ENCODE measurements at regions of chr6 and their contacts with region 1.

Region 1: DNA sequence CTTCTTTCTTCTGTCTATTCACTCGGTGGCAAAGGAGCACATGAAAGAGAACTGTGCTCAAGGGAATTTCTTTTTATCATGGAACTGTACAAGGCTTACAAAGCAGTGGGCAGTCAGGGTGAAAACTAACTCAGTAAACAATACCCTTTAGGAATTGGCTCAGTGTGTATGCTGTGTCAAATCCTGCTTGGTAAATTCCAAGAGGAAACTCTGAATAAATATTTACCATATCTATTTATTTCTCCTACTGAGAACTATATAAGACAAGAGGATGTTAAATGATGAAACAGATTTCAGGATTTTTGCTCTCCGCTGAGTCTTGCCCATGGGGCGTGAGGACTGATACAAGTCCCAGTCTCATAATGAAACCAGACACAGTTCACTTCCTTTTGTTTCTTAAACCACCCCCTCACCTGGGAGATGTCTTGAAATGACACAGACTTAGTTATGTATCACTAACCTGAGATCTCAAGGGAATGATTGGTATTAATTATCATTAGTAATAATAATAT is 188.8 kb downstream of the BACH2 start:
- DNase-seq: peak; percentile 69
- ATAC-seq: peak; percentile 34
- H3K4me3 Mint-ChIP-seq: peak overlapping the region; percentile 19
- H3K27ac Mint-ChIP-seq: peak overlapping the region; percentile 83
- H3K4me1 Mint-ChIP-seq: peaks cover 96% of the 10 kb centered on the region
- H3K27me3 Mint-ChIP-seq: no peaks in the 10 kb centered on the region
- CTCF ChIP-seq: no peak

Region 2: GRCh38 chr6:90074161-90074850 is 33.5 kb before region 1 on chr6:
- CTCF ChIA-PET with region 1: interaction called, 3 read pairs
- POLR2A ChIA-PET with region 1: interaction called, 13 read pairs
- intact Hi-C with region 1: loop called (anchors 5 kb)
- DNase-seq: no peak
- ATAC-seq: no peak
- H3K4me3 Mint-ChIP-seq: peak overlapping the region; percentile 96
- H3K27ac Mint-ChIP-seq: peak overlapping the region; percentile 94
- H3K4me1 Mint-ChIP-seq: peaks cover 84% of the 10 kb centered on the region
- H3K27me3 Mint-ChIP-seq: no peaks in the 10 kb centered on the region
- CTCF ChIP-seq: no peak

Region 3: GRCh38 chr6:90144396-90144795 is 36.6 kb after region 1 on chr6:
- CTCF ChIA-PET with region 1: interaction called, 5 read pairs
- POLR2A ChIA-PET with region 1: interaction called, 3 read pairs
- intact Hi-C with region 1: loop called (anchors 1 kb)
- DNase-seq: peak; percentile 75
- ATAC-seq: peak; percentile 71
- H3K4me3 Mint-ChIP-seq: peak overlapping the region; percentile 34
- H3K27ac Mint-ChIP-seq: peak overlapping the region; percentile 89
- H3K4me1 Mint-ChIP-seq: peaks cover 78% of the 10 kb centered on the region
- H3K27me3 Mint-ChIP-seq: no peaks in the 10 kb centered on the region
- CTCF ChIP-seq: no peak

Region 4: DNA sequence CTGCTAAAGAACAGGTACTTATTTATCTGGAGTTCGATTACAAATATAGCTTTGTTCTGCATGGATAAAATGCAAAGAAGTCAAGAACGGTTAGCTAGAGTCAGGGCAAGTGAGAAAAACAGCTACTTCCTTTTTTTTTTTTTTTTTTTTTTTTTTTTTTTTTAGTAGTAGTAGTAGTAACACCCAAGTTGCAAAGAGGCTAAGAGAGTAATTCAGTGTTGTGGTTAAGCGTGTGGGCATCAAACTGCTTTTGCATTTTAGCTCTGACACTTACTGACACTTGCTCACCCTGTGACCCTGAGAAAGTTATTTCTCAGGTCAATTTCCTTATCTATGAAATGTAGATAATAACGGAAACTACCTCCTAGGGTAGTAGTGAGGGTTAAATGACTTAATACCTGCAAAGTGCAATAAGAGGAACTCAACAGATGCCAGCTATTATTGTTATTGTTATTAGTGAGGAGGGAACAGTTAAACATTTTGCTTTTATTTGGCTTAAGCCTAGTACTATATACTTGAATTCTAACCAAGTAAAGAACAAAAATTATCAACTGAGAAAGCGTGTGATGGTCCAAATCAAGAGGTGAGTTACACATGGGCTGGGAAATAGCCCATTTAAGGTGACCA is 275.5 kb after region 1 on chr6:
- CTCF ChIA-PET with region 1: no interaction called
- POLR2A ChIA-PET with region 1: no interaction called
- intact Hi-C with region 1: no loop called
- DNase-seq: peak; percentile 60
- ATAC-seq: peak; percentile 95
- H3K4me3 Mint-ChIP-seq: no peak overlapping the region
- H3K27ac Mint-ChIP-seq: no peak overlapping the region
- H3K4me1 Mint-ChIP-seq: peaks cover 31% of the 10 kb centered on the region
- H3K27me3 Mint-ChIP-seq: peaks cover 2% of the 10 kb centered on the region
- CTCF ChIP-seq: no peak